Tibial artery (tissue), 4 donors: ENCODE measurements at regions of chr20 and their contacts with region 1.

Region 1: GRCh38 chr20:49541733-49542513 is 26.0 kb downstream of the PTGIS start:
- DNase-seq: peak; percentile 78 to 87
- H3K4me3 ChIP-seq: no peak overlapping the region
- H3K27ac ChIP-seq: peak overlapping the region; percentile 68 to 99
- H3K4me1 ChIP-seq: peaks cover 0 to 44% (median 11%) of the 10 kb centered on the region in 4 donors
- H3K27me3 ChIP-seq: no peaks in the 10 kb centered on the region
- CTCF ChIP-seq: peak; percentile 90 to 99

Region 2: DNA sequence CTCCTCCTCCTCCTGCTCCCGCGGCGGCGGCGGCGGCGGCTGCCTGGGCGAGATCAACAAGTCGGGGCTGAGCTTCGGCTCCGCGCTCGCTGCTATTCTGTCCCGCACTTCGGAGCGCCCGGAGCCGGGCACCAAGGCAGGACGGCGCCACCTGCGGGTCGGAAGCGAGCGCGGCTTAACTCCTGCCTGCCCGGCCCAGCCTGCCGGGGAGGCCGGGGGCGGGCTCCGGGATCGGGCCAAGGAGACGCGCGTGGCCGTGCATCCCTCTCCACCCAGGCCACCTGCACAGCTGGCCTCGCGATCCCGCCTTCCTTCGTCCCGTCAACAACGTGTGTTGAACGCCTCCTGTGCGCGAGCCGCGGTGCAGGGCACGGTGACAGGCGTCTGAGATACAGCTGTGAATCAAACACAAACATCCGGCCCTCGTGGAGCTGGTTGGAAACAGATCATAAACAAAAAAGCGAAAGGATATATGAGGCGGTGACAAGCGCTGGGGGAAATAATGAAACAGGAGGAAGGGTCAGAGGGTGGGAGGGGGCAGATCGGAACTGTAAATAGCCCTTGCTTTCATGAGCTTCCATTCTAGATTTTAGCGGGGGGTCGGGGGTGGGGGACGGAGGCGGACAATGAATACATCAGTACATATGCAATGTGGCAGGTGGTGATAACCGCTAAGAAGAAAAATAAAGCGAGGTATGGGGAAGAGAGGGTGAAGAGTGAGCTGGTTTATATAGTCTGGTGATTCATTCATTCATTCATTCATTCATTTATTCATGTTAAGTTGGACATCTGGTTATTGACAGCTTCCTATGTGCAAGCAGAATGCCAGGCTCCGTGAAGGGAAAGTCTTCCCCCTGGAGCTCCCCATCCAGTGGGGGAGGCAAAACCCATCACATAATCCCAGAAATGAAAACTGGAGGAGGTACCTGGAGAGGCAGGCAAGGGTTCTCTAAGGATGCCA is 57.5 kb before region 1 on chr20:
- intact Hi-C with region 1: no loop called
- DNase-seq: peak; percentile 78 to 87
- H3K4me3 ChIP-seq: peak overlapping the region; percentile 51 to 61
- H3K27ac ChIP-seq: no peak overlapping the region
- H3K4me1 ChIP-seq: peaks cover 0 to 33% (median 22%) of the 10 kb centered on the region in 4 donors
- H3K27me3 ChIP-seq: peaks cover 0 to 25% of the 10 kb centered on the region in 2 donors
- CTCF ChIP-seq: peak; percentile 76 to 88

Region 3: GRCh38 chr20:49853640-49854039 is 311.7 kb after region 1 on chr20:
- intact Hi-C with region 1: loop called (anchors 10 kb)
- DNase-seq: peak in 1 of 2 donors; percentile 82
- H3K4me3 ChIP-seq: no peak overlapping the region
- H3K27ac ChIP-seq: peak overlapping the region; percentile 74 to 78
- H3K4me1 ChIP-seq: peaks cover 0 to 56% (median 40%) of the 10 kb centered on the region in 4 donors
- H3K27me3 ChIP-seq: no peaks in the 10 kb centered on the region
- CTCF ChIP-seq: no peak

Region 4: GRCh38 chr20:49915378-49916145 is 373.6 kb after region 1 on chr20 and contains the start of gene SPATA2:
- intact Hi-C with region 1: loop called (anchors 10 kb)
- DNase-seq: peak; percentile 97 to 98
- H3K4me3 ChIP-seq: peak within 1 kb of the TSS; percentile 70 to 90
- H3K27ac ChIP-seq: peak within 1 kb of the TSS; percentile 96 to 97
- H3K4me1 ChIP-seq: peaks cover 0 to 32% (median 21%) of the 10 kb centered on the region in 4 donors
- H3K27me3 ChIP-seq: no peaks in the 10 kb centered on the region
- CTCF ChIP-seq: no peak

Region 5: GRCh38 chr20:50237349-50238085 is 695.6 kb after region 1 on chr20:
- intact Hi-C with region 1: no loop called
- DNase-seq: no peak
- H3K4me3 ChIP-seq: no peak overlapping the region
- H3K27ac ChIP-seq: no peak overlapping the region
- H3K4me1 ChIP-seq: peaks cover 0 to 13% (median 0%) of the 10 kb centered on the region in 4 donors
- H3K27me3 ChIP-seq: peaks cover 0 to 8% of the 10 kb centered on the region in 2 donors
- CTCF ChIP-seq: no peak